Naive thymus-derived CD4-positive, alpha-beta T cell (primary cell): ENCODE measurements at regions of chr22 and their contacts with region 1.

Region 1: GRCh38 chr22:46071451-46072109 is 78.7 kb upstream of the PPARA start:
- DNase-seq: peak in 8 of 9 donors; percentile 45 to 77 (median 66)
- ATAC-seq: peak; percentile 44
- H3K4me3 ChIP-seq: peak overlapping the region; percentile 66
- H3K4me3 Mint-ChIP-seq: peak overlapping the region; percentile 82 to 90 (median 86)
- H3K27ac ChIP-seq: peak overlapping the region; percentile 69
- H3K27ac Mint-ChIP-seq: peak overlapping the region in 7 of 9 donors; percentile 57 to 90 (median 74)
- H3K4me1 ChIP-seq: peaks cover 0 to 37% of the 10 kb centered on the region in 2 donors
- H3K4me1 Mint-ChIP-seq: peaks cover 42 to 73% (median 66%) of the 10 kb centered on the region in 7 donors
- H3K27me3 ChIP-seq: no peaks in the 10 kb centered on the region
- H3K27me3 Mint-ChIP-seq: peaks cover 0 to 10% (median 0%) of the 10 kb centered on the region in 5 donors

Region 2: DNA sequence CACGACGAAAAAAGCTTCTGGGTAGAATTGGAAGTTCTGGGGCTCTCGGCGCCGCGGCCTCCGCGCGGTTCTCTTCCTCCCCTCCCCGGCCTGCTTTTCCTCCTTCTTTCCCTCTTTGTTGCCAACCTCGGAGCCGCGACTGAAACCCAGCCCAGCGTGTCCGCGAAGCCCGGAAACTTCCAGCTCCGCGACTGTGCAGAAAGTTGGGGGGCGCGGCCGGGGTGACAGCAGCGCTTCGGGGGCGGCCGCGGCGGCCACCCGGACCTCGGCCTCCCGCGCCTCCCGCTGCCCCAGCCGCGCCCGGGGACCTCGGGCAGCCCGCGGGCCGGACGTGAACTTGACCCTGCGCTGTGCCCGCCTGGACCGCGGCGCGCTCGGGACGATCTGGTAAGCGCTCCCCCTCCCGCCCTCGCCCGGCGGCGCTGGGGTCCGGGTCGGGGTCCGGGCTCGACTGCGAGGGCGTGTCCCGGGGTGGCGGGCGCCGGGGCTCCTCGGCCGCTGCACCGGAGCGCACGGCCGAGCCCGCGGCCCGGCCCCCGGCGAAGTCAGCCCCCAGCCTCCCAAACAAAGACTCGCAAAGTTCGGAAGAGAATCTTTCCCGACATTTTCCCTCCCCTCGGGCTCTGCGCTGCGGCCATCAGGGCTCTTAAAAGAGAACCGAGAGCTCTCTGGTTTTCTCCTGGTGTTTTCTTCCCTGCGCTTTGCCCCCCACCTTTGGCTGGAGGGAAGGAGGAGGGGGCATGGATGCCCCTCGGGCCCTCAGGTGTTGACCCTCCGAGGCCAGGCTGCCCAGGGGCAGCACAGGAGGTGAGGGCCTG is 26.8 kb before region 1 on chr22:
- CTCF ChIA-PET with region 1: no interaction called
- POLR2A ChIA-PET with region 1: interaction called, 29 read pairs
- intact Hi-C with region 1: loop called in 1 of 2 experiments (anchors 2 kb)
- DNase-seq: peak; percentile 24 to 54 (median 48)
- ATAC-seq: peak; percentile 44
- H3K4me3 ChIP-seq: peak overlapping the region; percentile 67
- H3K4me3 Mint-ChIP-seq: peak overlapping the region; percentile 86 to 92 (median 90)
- H3K27ac ChIP-seq: peak overlapping the region; percentile 76
- H3K27ac Mint-ChIP-seq: peak overlapping the region; percentile 86 to 96 (median 94)
- H3K4me1 ChIP-seq: peaks cover 10 to 17% of the 10 kb centered on the region in 2 donors
- H3K4me1 Mint-ChIP-seq: peaks cover 14 to 64% (median 39%) of the 10 kb centered on the region in 7 donors
- H3K27me3 ChIP-seq: no peaks in the 10 kb centered on the region
- H3K27me3 Mint-ChIP-seq: peaks cover 0 to 6% (median 0%) of the 10 kb centered on the region in 5 donors

Region 3: GRCh38 chr22:46057762-46058420 is 13.7 kb before region 1 on chr22:
- CTCF ChIA-PET with region 1: interaction called, 4 read pairs
- POLR2A ChIA-PET with region 1: interaction called, 46 read pairs
- intact Hi-C with region 1: loop called (anchors 1 kb)
- DNase-seq: peak in 5 of 9 donors; percentile 39 to 55 (median 53)
- ATAC-seq: peak; percentile 74
- H3K4me3 ChIP-seq: no peak overlapping the region
- H3K4me3 Mint-ChIP-seq: peak overlapping the region; percentile 17 to 71 (median 66)
- H3K27ac ChIP-seq: peak overlapping the region; percentile 72
- H3K27ac Mint-ChIP-seq: peak overlapping the region; percentile 84 to 95 (median 87)
- H3K4me1 ChIP-seq: peaks cover 19 to 35% of the 10 kb centered on the region in 2 donors
- H3K4me1 Mint-ChIP-seq: peaks cover 29 to 64% (median 58%) of the 10 kb centered on the region in 7 donors
- H3K27me3 ChIP-seq: no peaks in the 10 kb centered on the region
- H3K27me3 Mint-ChIP-seq: peaks cover 0 to 5% (median 0%) of the 10 kb centered on the region in 5 donors

Region 4: DNA sequence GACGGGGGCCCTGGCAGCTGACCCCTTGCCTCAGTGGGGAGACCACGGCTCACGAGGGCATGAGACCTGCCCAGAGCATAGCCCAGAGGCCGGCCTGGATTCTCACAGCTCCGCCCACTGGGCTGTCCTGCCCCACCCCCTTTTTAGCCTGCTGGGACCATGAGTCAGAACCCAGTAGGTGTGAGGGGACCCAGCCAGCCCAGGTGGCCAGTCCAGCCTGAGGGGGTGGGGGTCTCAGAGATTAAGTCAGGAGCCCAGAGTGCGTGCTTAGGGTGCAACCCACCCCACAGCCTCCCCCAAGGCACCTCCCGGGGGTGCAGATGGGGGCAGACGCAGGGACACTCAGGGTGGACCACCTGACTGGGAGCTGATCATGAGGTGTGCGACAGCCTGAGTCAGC is 38.6 kb after region 1 on chr22:
- CTCF ChIA-PET with region 1: interaction called, 3 read pairs
- POLR2A ChIA-PET with region 1: no interaction called
- intact Hi-C with region 1: loop called in 1 of 2 experiments (anchors 5 kb)
- DNase-seq: no peak
- ATAC-seq: no peak
- H3K4me3 ChIP-seq: no peak overlapping the region
- H3K4me3 Mint-ChIP-seq: no peak overlapping the region
- H3K27ac ChIP-seq: no peak overlapping the region
- H3K27ac Mint-ChIP-seq: no peak overlapping the region
- H3K4me1 ChIP-seq: no peaks in the 10 kb centered on the region
- H3K4me1 Mint-ChIP-seq: peaks cover 0 to 3% (median 0%) of the 10 kb centered on the region in 7 donors
- H3K27me3 ChIP-seq: no peaks in the 10 kb centered on the region
- H3K27me3 Mint-ChIP-seq: no peaks in the 10 kb centered on the region

Region 5: GRCh38 chr22:46250035-46250782 is 178.6 kb after region 1 on chr22 and contains the start of gene CDPF1:
- CTCF ChIA-PET with region 1: no interaction called
- POLR2A ChIA-PET with region 1: no interaction called
- intact Hi-C with region 1: loop called in 1 of 2 experiments (anchors 5 kb)
- DNase-seq: peak; percentile 82 to 96 (median 86)
- ATAC-seq: peak; percentile 97
- H3K4me3 ChIP-seq: peak within 1 kb of the TSS; percentile 71
- H3K4me3 Mint-ChIP-seq: peak within 1 kb of the TSS; percentile 74 to 93 (median 83)
- H3K27ac ChIP-seq: peak within 1 kb of the TSS; percentile 77
- H3K27ac Mint-ChIP-seq: peak within 1 kb of the TSS; percentile 51 to 92 (median 77)
- H3K4me1 ChIP-seq: peaks cover 5 to 7% of the 10 kb centered on the region in 2 donors
- H3K4me1 Mint-ChIP-seq: peaks cover 17 to 32% (median 29%) of the 10 kb centered on the region in 7 donors
- H3K27me3 ChIP-seq: no peaks in the 10 kb centered on the region
- H3K27me3 Mint-ChIP-seq: no peaks in the 10 kb centered on the region
- total RNA-seq, gene CDPF1: 4.2 to 13.8 (median 11.7) TPM

Region 6: DNA sequence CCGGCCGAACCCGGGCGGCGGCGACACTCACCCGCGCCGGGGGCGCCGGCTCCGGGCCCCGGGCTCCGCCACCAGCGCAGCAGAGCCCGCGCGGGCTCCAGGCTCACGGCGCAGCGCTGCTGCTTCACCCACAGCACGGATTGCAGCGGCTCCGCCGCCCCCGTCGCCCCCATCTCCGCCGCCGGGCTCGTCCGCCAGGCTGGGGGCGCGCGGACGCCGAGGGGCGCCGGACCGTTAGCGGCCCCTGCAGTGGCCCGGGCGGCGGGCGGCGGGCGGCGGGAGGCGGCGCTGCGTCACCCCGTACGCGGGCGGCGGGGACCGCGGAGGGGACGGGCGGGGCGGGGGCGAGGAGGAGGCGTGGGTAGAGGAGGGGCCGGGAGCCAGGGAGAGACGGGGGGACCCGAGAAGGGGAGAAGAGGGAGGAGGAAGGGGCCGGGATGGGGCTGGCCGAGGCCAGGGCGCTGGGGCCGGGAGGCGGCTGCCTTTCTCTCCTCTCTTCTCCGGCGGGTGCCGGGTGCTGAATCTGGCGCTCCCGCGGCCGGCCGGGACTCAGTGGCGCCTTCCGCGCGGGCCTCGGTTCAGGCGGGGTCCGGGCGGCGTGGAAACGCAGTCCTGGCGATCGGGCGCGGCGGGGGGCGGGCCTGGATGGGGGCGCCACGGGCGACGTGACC is 666.5 kb after region 1 on chr22 and contains the start of gene CERK:
- CTCF ChIA-PET with region 1: no interaction called
- POLR2A ChIA-PET with region 1: no interaction called
- intact Hi-C with region 1: no loop called
- DNase-seq: peak; percentile 46 to 79 (median 57)
- ATAC-seq: peak; percentile 72
- H3K4me3 ChIP-seq: peak within 1 kb of the TSS; percentile 82
- H3K4me3 Mint-ChIP-seq: peak within 1 kb of the TSS; percentile 97 to 100 (median 99)
- H3K27ac ChIP-seq: peak within 1 kb of the TSS; percentile 86
- H3K27ac Mint-ChIP-seq: peak within 1 kb of the TSS; percentile 93 to 100 (median 98)
- H3K4me1 ChIP-seq: peaks cover 38 to 41% of the 10 kb centered on the region in 2 donors
- H3K4me1 Mint-ChIP-seq: peaks cover 34 to 52% (median 41%) of the 10 kb centered on the region in 7 donors
- H3K27me3 ChIP-seq: no peaks in the 10 kb centered on the region
- H3K27me3 Mint-ChIP-seq: no peaks in the 10 kb centered on the region
- total RNA-seq, gene CERK: 55.8 to 138 (median 72.4) TPM